Spleen (tissue), 13 donors: ENCODE measurements at regions of chr13 and their contacts with region 1.

Region 1: GRCh38 chr13:32581177-32581786 is 5.0 kb upstream of the PDS5B start:
- DNase-seq: no peak
- H3K4me3 ChIP-seq: no peak overlapping the region
- H3K27ac ChIP-seq: no peak overlapping the region
- H3K4me1 ChIP-seq: peaks cover 0 to 12% (median 7%) of the 10 kb centered on the region in 6 donors
- H3K27me3 ChIP-seq: no peaks in the 10 kb centered on the region
- CTCF ChIP-seq: peak in 6 of 11 experiments; percentile 16 to 53 (median 38)
- POLR2A ChIP-seq: no peak

Region 2: GRCh38 chr13:32530841-32531253 is 50.4 kb before region 1 on chr13:
- intact Hi-C with region 1: loop called (anchors 5 kb)
- DNase-seq: no peak
- H3K4me3 ChIP-seq: peak overlapping the region in 3 of 8 donors; percentile 4 to 31 (median 13)
- H3K27ac ChIP-seq: peak overlapping the region in 7 of 8 donors; percentile 27 to 61 (median 56)
- H3K4me1 ChIP-seq: peaks cover 53 to 97% (median 84%) of the 10 kb centered on the region in 6 donors
- H3K27me3 ChIP-seq: no peaks in the 10 kb centered on the region
- CTCF ChIP-seq: no peak
- POLR2A ChIP-seq: no peak